ENCODE measurements at regions of chr2 and their contacts with region 1.

Region 1: DNA sequence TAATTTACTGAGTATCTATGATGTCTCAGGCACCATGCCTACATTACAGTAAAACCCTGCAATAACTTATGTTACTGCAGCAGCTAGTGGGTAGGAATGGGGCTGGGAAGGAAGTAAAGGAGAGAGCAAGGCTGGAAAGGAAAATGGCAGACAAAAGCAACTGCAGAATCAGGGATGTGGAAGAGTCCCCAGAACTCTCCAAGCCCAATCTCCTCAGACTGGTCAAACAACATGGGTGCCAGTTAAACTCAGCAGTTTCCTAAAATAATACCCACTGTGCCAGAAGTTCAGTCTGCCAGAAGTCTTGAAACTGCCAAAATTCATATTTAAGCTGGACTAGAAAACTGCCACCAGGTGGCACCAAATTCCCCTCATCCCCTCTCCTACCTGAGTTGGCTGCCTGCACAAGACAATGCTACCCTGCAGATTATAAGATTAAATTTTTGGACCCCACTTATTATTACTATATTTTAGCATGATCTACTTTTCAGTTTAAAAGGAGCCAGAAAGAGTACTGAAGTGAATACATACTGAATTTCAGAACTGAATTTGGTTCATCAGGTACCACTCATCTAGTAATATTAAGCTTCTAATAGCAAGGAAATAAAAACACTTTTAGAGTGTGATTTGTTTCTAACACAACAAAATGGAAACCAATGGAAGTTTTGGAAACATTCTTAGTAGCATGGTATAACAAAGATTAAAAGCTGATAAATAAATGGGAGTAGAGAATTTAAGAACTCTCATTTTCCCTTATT is 86.8 kb upstream of the DNER start:
- DNase-seq: peak; percentile 62 to 71 (median 64)
- H3K4me3 ChIP-seq: no peak overlapping the region
- H3K4me3 Mint-ChIP-seq: no peak overlapping the region
- H3K27ac ChIP-seq: no peak overlapping the region
- H3K27ac Mint-ChIP-seq: peak overlapping the region in 4 of 7 donors; percentile 1 to 41 (median 21)
- H3K4me1 ChIP-seq: no peaks in the 10 kb centered on the region
- H3K4me1 Mint-ChIP-seq: peaks cover 0 to 3% (median 3%) of the 10 kb centered on the region in 4 donors
- H3K27me3 ChIP-seq: no peaks in the 10 kb centered on the region
- H3K27me3 Mint-ChIP-seq: no peaks in the 10 kb centered on the region

Region 2: GRCh38 chr2:229731916-229732315 is 69.3 kb before region 1 on chr2:
- CTCF ChIA-PET with region 1: no interaction called
- POLR2A ChIA-PET with region 1: no interaction called
- intact Hi-C with region 1: no loop called
- DNase-seq: no peak
- H3K4me3 ChIP-seq: no peak overlapping the region
- H3K4me3 Mint-ChIP-seq: no peak overlapping the region
- H3K27ac ChIP-seq: no peak overlapping the region
- H3K27ac Mint-ChIP-seq: no peak overlapping the region
- H3K4me1 ChIP-seq: no peaks in the 10 kb centered on the region
- H3K4me1 Mint-ChIP-seq: no peaks in the 10 kb centered on the region
- H3K27me3 ChIP-seq: no peaks in the 10 kb centered on the region
- H3K27me3 Mint-ChIP-seq: peaks cover 1 to 7% of the 10 kb centered on the region in 2 donors

Region 3: GRCh38 chr2:229780856-229781773 is 20.1 kb before region 1 on chr2:
- CTCF ChIA-PET with region 1: interaction called, 17 read pairs
- POLR2A ChIA-PET with region 1: no interaction called
- intact Hi-C with region 1: no loop called
- DNase-seq: peak in 4 of 5 donors; percentile 28 to 42 (median 38)
- H3K4me3 ChIP-seq: no peak overlapping the region
- H3K4me3 Mint-ChIP-seq: no peak overlapping the region
- H3K27ac ChIP-seq: no peak overlapping the region
- H3K27ac Mint-ChIP-seq: peak overlapping the region in 4 of 7 donors; percentile 4 to 33 (median 24)
- H3K4me1 ChIP-seq: peaks cover 8% of the 10 kb centered on the region
- H3K4me1 Mint-ChIP-seq: peaks cover 19 to 27% (median 24%) of the 10 kb centered on the region in 4 donors
- H3K27me3 ChIP-seq: no peaks in the 10 kb centered on the region
- H3K27me3 Mint-ChIP-seq: no peaks in the 10 kb centered on the region

Region 4: GRCh38 chr2:229852565-229852964 is 51.4 kb after region 1 on chr2:
- CTCF ChIA-PET with region 1: interaction called, 27 read pairs
- POLR2A ChIA-PET with region 1: interaction called, 4 read pairs
- intact Hi-C with region 1: no loop called
- DNase-seq: peak; percentile 45 to 57 (median 47)
- H3K4me3 ChIP-seq: no peak overlapping the region
- H3K4me3 Mint-ChIP-seq: peak overlapping the region in 6 of 8 donors; percentile 9 to 62 (median 42)
- H3K27ac ChIP-seq: peak overlapping the region; percentile 23
- H3K27ac Mint-ChIP-seq: peak overlapping the region; percentile 57 to 88 (median 78)
- H3K4me1 ChIP-seq: peaks cover 62% of the 10 kb centered on the region
- H3K4me1 Mint-ChIP-seq: peaks cover 47 to 77% (median 61%) of the 10 kb centered on the region in 4 donors
- H3K27me3 ChIP-seq: no peaks in the 10 kb centered on the region
- H3K27me3 Mint-ChIP-seq: no peaks in the 10 kb centered on the region

Region 5: DNA sequence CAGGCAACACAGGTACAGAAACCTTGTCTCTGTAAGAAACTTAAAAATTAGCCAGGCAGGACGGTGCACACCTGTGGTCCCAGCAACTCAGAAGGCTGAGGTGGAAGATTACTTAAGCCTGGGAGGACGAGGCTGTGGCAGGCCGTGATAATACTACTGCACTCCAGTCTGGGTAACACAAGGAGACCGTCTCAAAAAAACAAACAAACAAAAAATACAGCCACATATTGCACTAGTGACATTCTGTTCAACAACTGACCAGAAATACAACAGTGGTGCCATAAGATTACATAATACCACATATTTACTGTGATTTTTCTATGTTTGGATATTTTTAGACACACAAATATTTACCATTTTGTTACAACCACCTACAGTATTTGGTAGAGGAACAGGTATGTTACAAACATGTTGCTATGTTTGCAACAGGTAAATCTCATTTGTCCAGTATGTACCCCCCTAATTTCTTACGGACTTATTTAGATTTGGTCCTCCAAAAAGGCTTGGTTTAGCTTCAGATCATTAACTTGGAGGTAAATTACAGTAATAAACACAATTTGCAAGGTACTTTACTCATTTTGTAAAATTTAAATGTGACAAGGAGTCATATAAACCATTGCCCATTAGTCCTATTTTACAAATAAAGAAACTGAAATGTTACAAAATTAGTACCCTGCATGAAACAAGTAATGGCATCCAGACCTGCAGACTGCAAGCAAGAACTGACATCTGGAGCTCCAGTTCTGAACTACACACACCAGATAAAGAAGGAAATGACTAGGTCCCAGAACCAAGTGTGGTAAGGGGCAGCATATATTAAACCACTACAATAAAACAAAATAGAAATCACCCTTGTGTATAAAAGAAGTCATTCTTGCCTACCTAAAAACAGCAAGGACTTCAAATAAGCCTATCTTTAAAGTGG is 83.9 kb after region 1 on chr2:
- CTCF ChIA-PET with region 1: interaction called, 15 read pairs
- POLR2A ChIA-PET with region 1: no interaction called
- intact Hi-C with region 1: loop called (anchors 1 kb)
- DNase-seq: no peak
- H3K4me3 ChIP-seq: no peak overlapping the region
- H3K4me3 Mint-ChIP-seq: no peak overlapping the region
- H3K27ac ChIP-seq: no peak overlapping the region
- H3K27ac Mint-ChIP-seq: peak overlapping the region in 3 of 7 donors; percentile 54 to 66 (median 62)
- H3K4me1 ChIP-seq: peaks cover 19% of the 10 kb centered on the region
- H3K4me1 Mint-ChIP-seq: peaks cover 41 to 65% (median 52%) of the 10 kb centered on the region in 4 donors
- H3K27me3 ChIP-seq: no peaks in the 10 kb centered on the region
- H3K27me3 Mint-ChIP-seq: no peaks in the 10 kb centered on the region

Region 6: DNA sequence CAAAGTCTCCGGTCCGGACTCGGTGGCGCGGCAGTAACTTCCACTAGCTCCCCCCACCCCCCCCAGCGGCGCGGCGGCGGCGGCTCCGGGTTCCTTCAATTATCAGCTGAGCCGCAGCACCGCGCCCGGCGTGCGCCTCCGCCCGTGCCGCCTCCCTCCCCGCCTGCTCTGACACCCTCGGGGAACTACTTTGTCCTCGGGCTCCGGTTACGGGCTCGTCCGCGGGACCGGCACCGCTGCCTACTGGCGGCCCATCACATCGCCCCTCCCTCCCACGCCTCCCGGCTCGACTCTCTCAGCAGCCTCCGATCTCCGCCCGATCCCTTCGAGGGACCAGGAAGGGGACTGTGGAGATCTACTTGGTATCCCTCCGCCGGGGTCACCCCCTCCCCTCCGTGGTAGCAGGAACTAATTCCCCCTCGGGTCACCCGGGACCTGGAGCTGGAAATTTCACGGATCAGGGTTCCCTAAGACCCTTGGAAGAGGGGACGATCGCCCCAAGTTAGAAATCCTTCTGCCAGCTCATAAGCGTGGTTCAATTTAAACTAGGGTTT is 120.8 kb after region 1 on chr2 and contains the start of gene TRIP12:
- CTCF ChIA-PET with region 1: interaction called, 14 read pairs
- POLR2A ChIA-PET with region 1: interaction called, 18 read pairs
- intact Hi-C with region 1: loop called (anchors 1 kb)
- DNase-seq: peak; percentile 93 to 98 (median 95)
- H3K4me3 ChIP-seq: peak within 1 kb of the TSS; percentile 98 to 99
- H3K4me3 Mint-ChIP-seq: peak within 1 kb of the TSS; percentile 93 to 100 (median 98)
- H3K27ac ChIP-seq: peak within 1 kb of the TSS; percentile 97
- H3K27ac Mint-ChIP-seq: peak within 1 kb of the TSS; percentile 97 to 100 (median 98)
- H3K4me1 ChIP-seq: peaks cover 43% of the 10 kb centered on the region
- H3K4me1 Mint-ChIP-seq: peaks cover 28 to 55% (median 34%) of the 10 kb centered on the region in 4 donors
- H3K27me3 ChIP-seq: no peaks in the 10 kb centered on the region
- H3K27me3 Mint-ChIP-seq: peaks cover 0 to 4% of the 10 kb centered on the region in 2 donors
- total RNA-seq, gene TRIP12: 218 to 224 TPM

Region 7: DNA sequence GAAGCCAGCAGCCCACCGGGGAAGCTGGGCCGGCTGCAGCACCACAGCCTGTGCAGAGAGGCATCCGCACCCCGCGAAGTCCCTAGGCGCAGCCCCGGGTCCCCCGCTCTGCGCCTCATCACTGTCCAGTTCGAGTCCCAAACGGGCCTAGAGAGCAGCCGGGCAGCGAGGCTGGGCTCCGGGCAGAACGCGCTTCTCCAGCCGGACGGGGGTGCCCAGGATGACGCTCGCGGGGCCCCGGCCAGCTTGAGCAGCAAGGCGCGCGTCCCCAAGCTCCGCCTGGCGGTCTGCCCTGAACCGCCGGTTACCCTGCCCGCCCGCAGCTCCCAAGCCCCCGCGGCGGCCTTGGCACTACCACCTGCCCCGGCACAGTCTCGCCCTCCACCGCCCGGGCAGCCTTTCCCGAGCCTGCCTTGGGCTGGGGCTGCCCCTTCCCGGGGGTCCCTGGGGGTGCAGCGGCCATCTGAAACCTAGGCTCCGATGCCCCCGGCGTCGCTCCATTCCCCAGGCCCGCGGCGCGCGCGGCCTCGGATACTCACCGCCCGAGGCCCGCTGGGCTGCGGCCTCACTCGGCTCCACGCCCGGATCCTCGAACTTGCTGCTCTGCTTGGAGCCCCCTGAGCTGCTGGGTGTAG is 267.0 kb after region 1 on chr2:
- CTCF ChIA-PET with region 1: no interaction called
- POLR2A ChIA-PET with region 1: no interaction called
- intact Hi-C with region 1: loop called (anchors 2 kb)
- DNase-seq: peak in 4 of 5 donors; percentile 22 to 51 (median 32)
- H3K4me3 ChIP-seq: peak overlapping the region in 1 of 2 donors; percentile 70
- H3K4me3 Mint-ChIP-seq: peak overlapping the region; percentile 89 to 94 (median 92)
- H3K27ac ChIP-seq: no peak overlapping the region
- H3K27ac Mint-ChIP-seq: peak overlapping the region in 3 of 7 donors; percentile 12 to 67 (median 30)
- H3K4me1 ChIP-seq: peaks cover 12% of the 10 kb centered on the region
- H3K4me1 Mint-ChIP-seq: peaks cover 8 to 15% (median 10%) of the 10 kb centered on the region in 4 donors
- H3K27me3 ChIP-seq: no peaks in the 10 kb centered on the region
- H3K27me3 Mint-ChIP-seq: peaks cover 4 to 11% of the 10 kb centered on the region in 2 donors

Region 8: DNA sequence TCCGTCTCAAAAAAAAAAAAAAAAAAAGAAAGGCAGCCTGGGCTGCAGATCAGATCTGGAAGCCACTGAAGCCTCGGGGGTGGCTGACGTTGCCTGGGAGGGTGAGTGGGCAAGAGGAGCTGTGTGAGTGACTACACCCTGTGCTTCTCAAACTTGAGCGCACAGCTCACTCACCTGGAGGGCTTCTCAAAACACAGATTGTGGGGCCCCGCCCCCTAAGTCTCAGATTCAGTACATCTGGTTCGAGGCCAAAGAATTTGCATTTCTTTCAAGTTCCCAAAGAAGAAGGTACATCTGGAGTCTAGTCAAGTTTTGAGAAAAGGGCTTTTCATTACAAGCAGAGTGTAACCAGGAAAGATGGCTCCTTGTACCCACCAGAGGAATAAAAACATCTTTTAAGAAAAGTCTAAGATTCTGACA is 813.7 kb after region 1 on chr2:
- CTCF ChIA-PET with region 1: no interaction called
- POLR2A ChIA-PET with region 1: no interaction called
- intact Hi-C with region 1: loop called (anchors 2 kb)
- DNase-seq: no peak
- H3K4me3 ChIP-seq: no peak overlapping the region
- H3K4me3 Mint-ChIP-seq: no peak overlapping the region
- H3K27ac ChIP-seq: no peak overlapping the region
- H3K27ac Mint-ChIP-seq: no peak overlapping the region
- H3K4me1 ChIP-seq: peaks cover 25% of the 10 kb centered on the region
- H3K4me1 Mint-ChIP-seq: peaks cover 9 to 19% (median 16%) of the 10 kb centered on the region in 4 donors
- H3K27me3 ChIP-seq: no peaks in the 10 kb centered on the region
- H3K27me3 Mint-ChIP-seq: no peaks in the 10 kb centered on the region